ENCODE measurements at regions of chr19 and their contacts with region 1.

Region 1: GRCh38 chr19:47600246-47601179 is 8.4 kb upstream of the BICRA start:
- DNase-seq: peak; percentile 100
- H3K4me3 ChIP-seq: peak overlapping the region; percentile 28 to 78 (median 40)
- H3K27ac ChIP-seq: peak overlapping the region; percentile 89 to 96 (median 94)
- H3K4me1 ChIP-seq: peaks cover 5 to 33% (median 20%) of the 10 kb centered on the region in 4 donors
- H3K27me3 ChIP-seq: no peaks in the 10 kb centered on the region
- CTCF ChIP-seq: peak in 1 of 5 experiments; percentile 9
- EP300 ChIP-seq: no peak
- POLR2A ChIP-seq: peak; percentile 92

Region 2: DNA sequence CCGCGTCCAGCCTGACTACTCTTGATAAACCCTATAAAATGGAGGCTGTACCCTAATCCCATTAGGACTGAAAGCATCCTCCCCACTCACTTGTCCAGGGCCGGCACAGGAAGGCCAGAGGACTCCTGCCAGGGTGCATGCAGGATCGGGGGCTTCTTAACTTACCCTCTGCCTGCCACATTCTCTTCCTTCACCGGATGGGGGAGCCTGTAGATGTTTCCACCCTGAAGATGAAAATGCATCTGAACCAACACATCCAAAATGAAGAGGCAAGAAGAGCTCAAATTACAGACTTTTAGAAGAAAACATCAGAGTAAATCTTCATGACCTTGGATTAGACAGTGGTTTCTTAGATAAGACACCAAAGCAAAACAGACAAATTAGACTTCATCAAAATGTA is 59.8 kb before region 1 on chr19:
- in situ Hi-C with region 1: no loop called
- intact Hi-C with region 1: loop called (anchors 10 kb)
- DNase-seq: no peak
- H3K4me3 ChIP-seq: no peak overlapping the region
- H3K27ac ChIP-seq: peak overlapping the region; percentile 55 to 79 (median 73)
- H3K4me1 ChIP-seq: peaks cover 0 to 14% (median 2%) of the 10 kb centered on the region in 4 donors
- H3K27me3 ChIP-seq: peaks cover 15% of the 10 kb centered on the region
- CTCF ChIP-seq: peak in 1 of 5 experiments; percentile 4
- EP300 ChIP-seq: no peak
- POLR2A ChIP-seq: no peak